ENCODE measurements at regions of chr16 and their contacts with region 1.

Region 1: GRCh38 chr16:84970447-84971127 is 40.7 kb downstream of the ZDHHC7 start:
- DNase-seq: peak; percentile 85
- ATAC-seq: peak; percentile 98
- H3K4me3 Mint-ChIP-seq: no peak overlapping the region
- H3K27ac Mint-ChIP-seq: no peak overlapping the region
- H3K4me1 Mint-ChIP-seq: peaks cover 4% of the 10 kb centered on the region
- H3K27me3 Mint-ChIP-seq: peaks cover 1% of the 10 kb centered on the region
- CTCF ChIP-seq: peak; percentile 88

Region 2: DNA sequence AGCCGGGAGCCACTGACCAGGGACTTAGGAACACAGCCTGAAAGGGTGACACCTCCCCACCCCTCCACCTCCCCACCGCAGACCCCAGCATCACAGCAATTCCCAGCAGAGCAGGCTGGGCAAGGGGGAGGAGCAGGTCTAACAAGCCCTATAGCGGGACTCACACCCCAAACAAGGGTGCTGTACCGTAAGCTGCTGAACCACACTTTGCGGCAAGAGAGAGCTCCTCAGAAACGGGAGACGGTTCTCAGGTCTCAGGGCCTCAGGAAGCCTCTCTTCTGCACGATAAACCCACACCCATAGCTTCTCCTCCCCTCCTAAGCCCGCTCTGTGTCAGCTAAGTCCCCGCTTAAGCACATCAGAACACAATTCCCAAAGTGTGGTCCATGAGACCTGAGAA is 341.0 kb before region 1 on chr16:
- CTCF ChIA-PET with region 1: no interaction called
- POLR2A ChIA-PET with region 1: no interaction called
- intact Hi-C with region 1: loop called (anchors 10 kb)
- DNase-seq: no peak
- ATAC-seq: peak; percentile 60
- H3K4me3 Mint-ChIP-seq: no peak overlapping the region
- H3K27ac Mint-ChIP-seq: no peak overlapping the region
- H3K4me1 Mint-ChIP-seq: peaks cover 24% of the 10 kb centered on the region
- H3K27me3 Mint-ChIP-seq: peaks cover 2% of the 10 kb centered on the region
- CTCF ChIP-seq: no peak

Region 3: DNA sequence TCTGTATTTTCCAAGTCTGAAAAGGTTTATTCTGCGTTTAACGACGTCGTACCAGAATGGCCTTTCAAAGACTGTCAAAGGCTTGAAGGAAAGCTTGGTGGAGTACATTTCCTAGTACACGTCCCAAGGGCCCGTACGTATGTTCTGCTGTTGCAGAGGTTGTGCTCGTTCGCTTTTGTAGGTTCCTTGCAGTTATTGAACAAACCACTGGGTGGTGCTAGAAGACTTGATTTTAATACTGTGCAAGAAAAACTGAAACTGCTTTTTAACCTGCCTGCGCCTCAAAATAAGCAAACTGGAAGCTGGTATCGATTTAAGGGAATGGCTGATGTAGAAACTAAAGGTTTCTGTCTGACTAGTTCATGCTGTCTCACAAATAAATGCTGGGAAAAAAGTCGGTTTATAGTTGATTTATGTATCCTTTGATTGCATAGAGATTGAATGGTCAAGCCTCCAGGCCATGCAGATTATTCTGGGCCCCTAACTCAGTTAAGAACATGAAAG is 216.2 kb before region 1 on chr16:
- CTCF ChIA-PET with region 1: interaction called, 74 read pairs
- POLR2A ChIA-PET with region 1: no interaction called
- intact Hi-C with region 1: loop called (anchors 5 kb)
- DNase-seq: peak; percentile 78
- ATAC-seq: peak; percentile 84
- H3K4me3 Mint-ChIP-seq: no peak overlapping the region
- H3K27ac Mint-ChIP-seq: peak overlapping the region; percentile 13
- H3K4me1 Mint-ChIP-seq: peaks cover 83% of the 10 kb centered on the region
- H3K27me3 Mint-ChIP-seq: no peaks in the 10 kb centered on the region
- CTCF ChIP-seq: peak; percentile 89

Region 4: DNA sequence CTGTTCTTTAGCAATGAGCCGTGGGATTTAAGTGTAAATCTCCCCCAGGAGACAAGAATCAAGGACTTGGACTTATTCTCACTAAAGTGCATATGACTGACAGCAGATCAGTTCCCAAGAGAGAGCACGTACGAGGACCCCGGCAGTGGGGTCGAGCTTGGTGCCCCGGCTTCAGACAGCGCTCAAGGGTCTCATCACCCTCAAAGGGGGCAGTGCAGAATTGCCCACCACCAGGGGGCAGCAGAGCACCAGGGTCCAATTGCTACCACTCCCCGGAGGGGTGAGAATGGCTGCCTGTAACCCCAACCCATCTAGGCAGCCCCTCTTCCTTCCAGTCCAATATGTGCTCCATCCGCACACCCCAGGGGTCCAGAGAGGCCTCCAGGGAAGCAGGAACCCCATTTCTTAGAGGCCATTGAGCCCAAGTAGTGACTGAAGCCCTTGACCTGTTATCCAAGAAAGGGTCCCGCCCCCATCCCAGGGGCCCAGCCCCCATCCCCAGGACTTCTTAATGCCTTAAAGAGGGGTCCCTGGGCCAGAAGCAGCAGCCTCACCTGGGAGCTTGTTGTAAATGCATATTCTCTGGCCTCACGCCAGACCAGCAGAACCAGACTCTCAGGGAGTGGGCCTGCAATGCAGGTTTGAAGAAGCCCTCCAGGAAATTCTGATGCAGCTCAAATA is 45.4 kb before region 1 on chr16:
- CTCF ChIA-PET with region 1: interaction called, 89 read pairs
- POLR2A ChIA-PET with region 1: no interaction called
- intact Hi-C with region 1: loop called (anchors 1 kb)
- DNase-seq: peak; percentile 82
- ATAC-seq: peak; percentile 62
- H3K4me3 Mint-ChIP-seq: no peak overlapping the region
- H3K27ac Mint-ChIP-seq: no peak overlapping the region
- H3K4me1 Mint-ChIP-seq: no peaks in the 10 kb centered on the region
- H3K27me3 Mint-ChIP-seq: peaks cover 3% of the 10 kb centered on the region
- CTCF ChIP-seq: peak; percentile 92

Region 5: DNA sequence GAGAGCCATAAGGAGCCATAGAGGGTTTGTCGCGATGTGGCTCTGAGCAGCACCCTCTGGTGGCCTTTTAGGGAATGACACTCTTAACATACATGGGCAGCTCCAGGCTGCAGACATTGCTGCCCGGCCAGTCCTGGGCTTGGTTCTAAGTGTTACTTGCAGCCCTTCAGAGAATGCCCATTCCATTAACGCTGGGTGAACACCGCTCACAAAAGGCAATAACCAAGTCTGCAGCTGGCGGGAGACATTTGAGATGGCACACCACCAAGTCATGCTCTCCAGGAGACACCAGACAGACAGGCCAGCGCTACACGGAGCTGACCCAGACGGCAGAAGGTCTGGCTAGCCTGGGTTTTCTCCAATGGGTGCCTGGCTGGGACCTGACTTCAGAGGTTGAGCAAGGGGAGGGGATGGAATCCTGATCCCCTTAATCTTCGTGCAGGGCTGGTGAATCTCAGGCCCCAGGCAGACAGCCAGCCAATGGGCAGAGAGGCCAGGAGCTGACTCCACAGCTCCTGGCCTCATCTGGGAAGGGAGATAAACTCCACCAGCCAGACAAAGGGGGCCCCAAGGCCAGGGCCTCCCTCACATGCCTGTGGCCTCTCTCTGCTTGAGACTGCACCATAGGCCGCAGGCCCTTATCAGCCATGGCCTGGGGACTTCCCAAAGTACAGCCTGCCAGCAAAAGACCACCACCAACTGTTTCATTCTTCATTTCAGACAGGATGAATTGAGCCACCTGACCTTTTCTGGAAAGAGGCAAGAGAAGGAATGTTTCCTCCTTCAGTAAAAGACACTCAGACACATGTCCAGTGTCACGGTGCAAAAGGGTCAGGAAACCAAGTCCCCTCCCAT is 18.0 kb before region 1 on chr16:
- CTCF ChIA-PET with region 1: interaction called, 76 read pairs
- POLR2A ChIA-PET with region 1: no interaction called
- intact Hi-C with region 1: no loop called
- DNase-seq: peak; percentile 82
- ATAC-seq: peak; percentile 95
- H3K4me3 Mint-ChIP-seq: no peak overlapping the region
- H3K27ac Mint-ChIP-seq: no peak overlapping the region
- H3K4me1 Mint-ChIP-seq: peaks cover 2% of the 10 kb centered on the region
- H3K27me3 Mint-ChIP-seq: peaks cover 3% of the 10 kb centered on the region
- CTCF ChIP-seq: peak; percentile 84

Region 6: DNA sequence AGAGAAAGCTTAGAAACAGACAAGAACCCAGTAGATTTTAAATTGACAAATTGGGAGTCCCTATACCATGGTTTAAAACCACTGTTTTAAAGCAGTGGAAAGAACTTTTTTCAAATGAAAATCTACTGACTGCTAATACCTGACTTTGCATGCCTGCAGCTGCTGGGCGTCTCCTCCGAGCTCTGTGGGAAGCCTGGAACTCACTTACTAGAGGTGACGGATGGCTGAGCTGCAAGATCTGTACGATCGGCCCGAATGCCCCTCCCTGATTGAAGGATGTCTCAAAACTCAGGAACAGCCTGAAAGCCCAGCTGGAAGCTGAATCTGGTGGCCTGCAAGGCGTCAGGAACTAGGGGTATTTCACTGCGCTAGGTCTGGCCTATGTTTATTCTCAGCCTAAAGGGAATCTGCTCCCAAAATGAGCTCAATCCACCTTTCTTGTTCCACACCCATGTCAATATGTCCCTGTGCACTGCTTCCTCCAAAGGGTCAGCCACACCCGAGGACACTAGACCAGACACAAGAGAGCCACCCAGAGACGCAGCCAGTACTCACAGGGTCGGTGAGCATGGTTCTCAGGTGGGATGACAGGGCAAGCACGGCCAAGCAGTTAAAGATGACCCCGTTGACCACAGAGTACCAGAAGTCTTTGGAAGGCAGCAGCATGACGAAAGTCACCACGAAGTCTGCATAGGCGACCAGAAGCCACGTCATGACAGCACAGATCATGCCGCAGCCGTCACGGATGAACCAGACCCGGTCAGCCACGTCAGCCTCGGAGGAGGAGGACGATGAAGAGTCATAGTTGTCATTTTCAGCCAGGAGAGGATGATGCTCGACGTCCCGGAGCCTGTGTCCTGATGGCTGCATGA is 19.4 kb after region 1 on chr16:
- CTCF ChIA-PET with region 1: interaction called, 12 read pairs
- POLR2A ChIA-PET with region 1: no interaction called
- intact Hi-C with region 1: no loop called
- DNase-seq: no peak
- ATAC-seq: no peak
- H3K4me3 Mint-ChIP-seq: no peak overlapping the region
- H3K27ac Mint-ChIP-seq: no peak overlapping the region
- H3K4me1 Mint-ChIP-seq: peaks cover 9% of the 10 kb centered on the region
- H3K27me3 Mint-ChIP-seq: no peaks in the 10 kb centered on the region
- CTCF ChIP-seq: no peak

Region 7: DNA sequence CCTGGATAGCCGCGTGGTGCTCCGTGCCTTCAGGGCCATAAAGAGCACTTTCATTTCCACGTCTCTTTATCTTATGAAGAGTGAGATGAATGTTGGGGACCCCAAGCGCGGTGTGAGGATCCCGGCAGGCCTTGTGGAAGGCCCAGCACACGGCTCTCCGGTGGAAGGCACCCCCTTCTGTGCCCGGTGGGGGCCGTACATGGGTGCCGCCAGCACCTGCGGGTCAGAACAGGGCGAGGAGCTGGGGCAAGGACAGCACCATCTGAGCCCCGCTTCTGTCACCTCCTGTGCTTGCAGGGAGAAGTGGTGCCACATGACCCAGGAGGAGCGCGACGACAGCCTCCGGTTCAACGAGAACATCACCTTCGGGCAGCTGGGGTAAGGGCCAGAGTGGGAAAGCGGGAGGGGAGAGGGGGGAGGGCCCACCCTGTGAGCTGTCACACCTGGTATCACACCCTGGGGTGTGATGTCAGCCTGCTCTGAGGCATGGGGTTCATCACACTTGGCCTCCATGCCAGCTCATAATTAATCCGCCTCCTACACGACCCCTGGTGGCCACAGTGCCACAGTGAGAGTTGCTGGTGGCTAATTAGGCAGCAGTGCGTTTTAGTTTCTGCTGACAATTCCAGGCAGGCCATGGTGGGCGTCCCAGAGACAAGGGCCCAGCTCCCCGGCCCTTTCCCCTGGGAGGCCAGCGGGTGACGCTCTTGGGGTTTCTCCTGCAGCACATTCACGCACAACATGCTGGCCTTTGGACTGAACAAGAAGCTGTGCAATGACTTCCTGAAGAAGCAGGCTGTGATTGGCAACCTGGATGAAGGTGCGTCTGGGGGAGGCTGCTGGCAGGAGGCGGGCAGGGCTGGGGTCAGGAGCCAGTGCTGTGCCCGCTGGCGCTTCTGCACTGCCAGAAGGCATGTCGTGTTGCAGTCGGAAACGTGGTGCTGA is 116.0 kb after region 1 on chr16:
- CTCF ChIA-PET with region 1: interaction called, 13 read pairs
- POLR2A ChIA-PET with region 1: interaction called, 3 read pairs
- intact Hi-C with region 1: no loop called
- DNase-seq: peak; percentile 93
- ATAC-seq: peak; percentile 96
- H3K4me3 Mint-ChIP-seq: no peak overlapping the region
- H3K27ac Mint-ChIP-seq: no peak overlapping the region
- H3K4me1 Mint-ChIP-seq: peaks cover 37% of the 10 kb centered on the region
- H3K27me3 Mint-ChIP-seq: no peaks in the 10 kb centered on the region
- CTCF ChIP-seq: peak; percentile 77